ENCODE measurements at regions of chr3 and their contacts with region 1.

Region 1: DNA sequence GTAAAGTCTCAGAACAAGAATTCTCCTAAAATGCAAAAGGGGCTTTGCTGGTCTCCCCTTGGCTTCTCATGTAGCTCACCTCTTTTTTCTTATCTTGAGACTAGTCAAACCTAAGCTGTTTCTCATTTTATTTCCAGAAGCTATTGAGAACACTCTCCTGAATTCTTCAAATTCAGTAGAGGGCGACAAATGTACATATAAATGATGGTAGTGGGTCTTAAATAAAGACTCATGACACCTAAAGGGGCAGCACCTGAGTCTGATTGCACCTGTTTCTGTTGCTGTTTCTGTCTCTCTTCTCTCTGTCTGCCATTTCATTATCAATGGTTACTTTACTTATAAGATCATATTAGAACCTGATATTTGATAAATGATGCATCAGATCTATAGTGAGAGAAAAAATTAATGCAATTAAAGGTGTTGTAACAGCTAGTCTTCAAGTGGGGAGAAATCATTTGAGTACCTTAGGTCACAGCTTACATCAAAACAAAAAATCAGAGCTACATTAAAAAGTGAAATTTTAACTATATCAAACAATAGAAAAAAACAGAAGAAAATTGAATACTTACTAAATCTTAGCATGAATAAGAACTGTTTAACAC is 7.0 kb downstream of the ADIPOQ start:
- DNase-seq: peak in 2 of 5 donors; percentile 59 to 65
- H3K4me3 ChIP-seq: no peak overlapping the region
- H3K4me3 Mint-ChIP-seq: no peak overlapping the region
- H3K27ac ChIP-seq: no peak overlapping the region
- H3K27ac Mint-ChIP-seq: peak overlapping the region in 4 of 8 donors; percentile 22 to 71 (median 48)
- H3K4me1 ChIP-seq: no peaks in the 10 kb centered on the region
- H3K4me1 Mint-ChIP-seq: peaks cover 18 to 26% (median 18%) of the 10 kb centered on the region in 3 donors
- H3K27me3 ChIP-seq: no peaks in the 10 kb centered on the region
- H3K27me3 Mint-ChIP-seq: peaks cover 14 to 19% of the 10 kb centered on the region in 2 donors

Region 2: DNA sequence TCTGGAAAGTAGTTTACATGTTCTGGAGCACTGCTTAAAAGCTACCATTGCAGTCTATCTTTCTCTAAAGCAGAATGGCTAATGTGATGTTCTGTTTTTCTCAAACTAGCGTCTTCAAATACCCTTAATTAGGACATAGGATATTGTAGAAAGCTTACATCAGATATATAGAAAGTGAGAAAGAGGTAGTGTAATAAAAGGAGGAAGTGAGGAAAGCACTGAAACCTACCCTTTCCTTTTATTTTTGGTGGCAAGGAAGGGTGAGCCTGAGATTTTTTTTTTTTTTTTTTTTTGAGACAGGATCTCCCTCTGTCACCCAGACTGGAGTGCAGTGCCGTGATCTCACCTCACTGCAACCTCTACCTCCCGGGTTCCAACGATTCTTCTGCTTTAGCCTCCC is 1253.9 kb before region 1 on chr3:
- CTCF ChIA-PET with region 1: no interaction called
- POLR2A ChIA-PET with region 1: interaction called, 13 read pairs
- DNase-seq: no peak
- H3K4me3 ChIP-seq: no peak overlapping the region
- H3K4me3 Mint-ChIP-seq: peak overlapping the region in 1 of 7 donors; percentile 1
- H3K27ac ChIP-seq: no peak overlapping the region
- H3K27ac Mint-ChIP-seq: peak overlapping the region in 2 of 8 donors; percentile 2 to 69
- H3K4me1 ChIP-seq: no peaks in the 10 kb centered on the region
- H3K4me1 Mint-ChIP-seq: peaks cover 15 to 20% (median 16%) of the 10 kb centered on the region in 3 donors
- H3K27me3 ChIP-seq: no peaks in the 10 kb centered on the region
- H3K27me3 Mint-ChIP-seq: no peaks in the 10 kb centered on the region

Region 3: GRCh38 chr3:186953011-186953487 is 103.6 kb after region 1 on chr3:
- CTCF ChIA-PET with region 1: interaction called, 11 read pairs
- POLR2A ChIA-PET with region 1: no interaction called
- DNase-seq: no peak
- H3K4me3 ChIP-seq: no peak overlapping the region
- H3K4me3 Mint-ChIP-seq: peak overlapping the region in 6 of 7 donors; percentile 20 to 64 (median 44)
- H3K27ac ChIP-seq: peak overlapping the region; percentile 53
- H3K27ac Mint-ChIP-seq: peak overlapping the region; percentile 48 to 92 (median 77)
- H3K4me1 ChIP-seq: peaks cover 69% of the 10 kb centered on the region
- H3K4me1 Mint-ChIP-seq: peaks cover 91 to 99% (median 98%) of the 10 kb centered on the region in 3 donors
- H3K27me3 ChIP-seq: no peaks in the 10 kb centered on the region
- H3K27me3 Mint-ChIP-seq: no peaks in the 10 kb centered on the region

Region 4: DNA sequence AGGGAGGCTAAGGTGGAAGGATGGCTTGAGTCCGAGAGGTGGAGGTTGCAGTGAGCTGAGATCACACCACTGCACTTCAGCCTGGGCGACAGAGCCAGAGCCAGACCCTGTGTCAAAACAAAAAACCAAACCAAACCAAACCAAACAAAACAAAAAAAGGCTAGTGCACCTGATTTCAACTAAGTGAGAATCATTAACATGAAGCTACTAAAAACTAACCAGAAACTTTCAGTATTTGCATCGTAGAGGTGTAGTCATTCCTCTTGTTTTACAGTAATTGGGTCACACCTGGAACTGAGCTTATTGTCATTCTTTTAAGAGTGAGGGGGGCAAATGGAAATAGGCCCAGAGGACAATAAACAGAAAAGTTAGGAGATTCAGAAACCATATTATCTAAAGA is 139.3 kb after region 1 on chr3:
- CTCF ChIA-PET with region 1: interaction called, 11 read pairs
- POLR2A ChIA-PET with region 1: no interaction called
- DNase-seq: no peak
- H3K4me3 ChIP-seq: no peak overlapping the region
- H3K4me3 Mint-ChIP-seq: no peak overlapping the region
- H3K27ac ChIP-seq: no peak overlapping the region
- H3K27ac Mint-ChIP-seq: peak overlapping the region; percentile 28 to 84 (median 51)
- H3K4me1 ChIP-seq: no peaks in the 10 kb centered on the region
- H3K4me1 Mint-ChIP-seq: peaks cover 63 to 88% (median 75%) of the 10 kb centered on the region in 3 donors
- H3K27me3 ChIP-seq: no peaks in the 10 kb centered on the region
- H3K27me3 Mint-ChIP-seq: peaks cover 0 to 1% of the 10 kb centered on the region in 2 donors

Region 5: DNA sequence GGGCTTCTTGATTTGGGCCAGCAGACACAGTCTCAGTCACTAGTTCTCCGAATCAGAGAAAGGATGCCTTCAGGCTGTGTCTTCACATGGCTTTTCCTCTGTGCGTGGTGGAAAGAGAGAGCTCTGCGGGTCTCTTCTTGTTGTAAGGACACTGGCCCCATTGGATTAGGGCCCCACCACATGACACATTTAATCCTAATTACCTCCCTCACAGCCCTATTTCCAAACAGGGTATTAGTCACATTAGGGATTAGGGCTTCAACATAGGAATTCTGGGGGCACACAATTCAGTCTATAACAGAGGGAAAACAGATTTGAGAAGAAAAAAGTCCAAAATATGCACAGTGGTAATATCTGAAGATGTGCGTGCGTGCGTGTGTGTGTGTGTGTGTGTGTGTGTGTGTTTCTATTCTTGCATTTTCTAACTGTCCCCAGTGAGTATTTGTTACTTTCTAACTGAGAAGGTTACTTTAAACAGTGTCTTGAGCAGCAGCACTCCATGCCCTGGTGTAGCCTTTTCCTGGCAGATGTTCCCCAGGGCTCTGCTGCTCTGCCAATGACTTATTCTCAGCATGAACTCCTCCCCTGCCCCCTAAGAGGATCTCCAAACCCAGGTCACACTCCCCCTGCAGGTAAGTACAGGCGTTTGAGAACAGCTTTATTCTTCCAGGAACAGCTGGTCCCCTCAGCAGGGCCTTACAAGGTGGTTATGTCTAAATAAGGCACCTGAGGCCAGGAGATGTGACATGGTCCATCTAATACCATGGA is 216.9 kb after region 1 on chr3:
- CTCF ChIA-PET with region 1: interaction called, 26 read pairs
- POLR2A ChIA-PET with region 1: no interaction called
- DNase-seq: peak; percentile 4 to 67 (median 43)
- H3K4me3 ChIP-seq: no peak overlapping the region
- H3K4me3 Mint-ChIP-seq: peak overlapping the region in 1 of 7 donors; percentile 25
- H3K27ac ChIP-seq: no peak overlapping the region
- H3K27ac Mint-ChIP-seq: peak overlapping the region; percentile 53 to 91 (median 78)
- H3K4me1 ChIP-seq: peaks cover 40% of the 10 kb centered on the region
- H3K4me1 Mint-ChIP-seq: peaks cover 62 to 74% (median 69%) of the 10 kb centered on the region in 3 donors
- H3K27me3 ChIP-seq: no peaks in the 10 kb centered on the region
- H3K27me3 Mint-ChIP-seq: no peaks in the 10 kb centered on the region

Region 6: DNA sequence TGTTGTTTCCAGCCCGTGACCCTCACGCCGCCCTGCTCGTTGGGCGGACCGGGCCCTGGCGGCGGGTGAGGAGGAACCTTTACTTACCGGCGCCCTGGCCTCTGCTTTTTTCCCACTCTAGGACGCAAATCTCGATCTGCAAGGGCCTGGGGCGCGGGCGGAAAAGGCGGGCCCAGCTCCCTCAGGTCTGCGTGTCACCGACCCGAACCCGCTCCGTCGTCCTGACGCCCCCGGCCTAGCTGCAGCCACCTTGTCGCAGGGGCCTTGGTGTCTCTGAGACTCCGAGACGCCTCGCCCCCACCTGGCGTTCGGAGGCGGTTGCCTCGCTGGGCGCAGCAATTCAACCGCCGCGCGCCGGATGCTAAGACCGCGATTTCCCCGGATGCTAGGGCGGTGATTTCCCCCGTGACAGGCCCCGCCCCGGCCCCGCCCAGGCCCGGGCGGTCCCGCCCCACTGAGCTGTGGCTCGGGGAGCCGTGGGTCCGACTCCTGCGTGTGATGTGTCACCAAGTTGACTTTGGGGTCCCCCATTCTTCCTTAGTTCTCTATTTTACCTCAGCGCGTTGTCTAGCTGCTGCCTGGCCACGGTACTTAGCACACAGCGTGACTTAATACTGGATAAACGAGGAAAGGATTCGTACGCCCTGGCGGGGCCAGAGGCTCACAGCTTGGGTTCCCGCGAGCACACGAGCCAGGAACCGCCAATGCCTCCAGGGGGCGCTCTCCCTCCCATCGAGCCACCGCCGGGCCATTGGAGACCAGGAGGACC is 289.8 kb after region 1 on chr3 and contains the start of gene RPL39L:
- CTCF ChIA-PET with region 1: interaction called, 15 read pairs
- POLR2A ChIA-PET with region 1: interaction called, 3 read pairs
- DNase-seq: peak; percentile 89 to 94 (median 90)
- H3K4me3 ChIP-seq: peak within 1 kb of the TSS; percentile 83
- H3K4me3 Mint-ChIP-seq: peak within 1 kb of the TSS; percentile 83 to 97 (median 90)
- H3K27ac ChIP-seq: peak within 1 kb of the TSS; percentile 78
- H3K27ac Mint-ChIP-seq: peak within 1 kb of the TSS; percentile 86 to 96 (median 93)
- H3K4me1 ChIP-seq: peaks cover 14% of the 10 kb centered on the region
- H3K4me1 Mint-ChIP-seq: peaks cover 15 to 27% (median 19%) of the 10 kb centered on the region in 3 donors
- H3K27me3 ChIP-seq: no peaks in the 10 kb centered on the region
- H3K27me3 Mint-ChIP-seq: no peaks in the 10 kb centered on the region
- total RNA-seq, gene RPL39L: 11.3 to 13.1 TPM